PC-9 (cell line): ENCODE measurements at regions of chr12 and their contacts with region 1.

Region 1: DNA sequence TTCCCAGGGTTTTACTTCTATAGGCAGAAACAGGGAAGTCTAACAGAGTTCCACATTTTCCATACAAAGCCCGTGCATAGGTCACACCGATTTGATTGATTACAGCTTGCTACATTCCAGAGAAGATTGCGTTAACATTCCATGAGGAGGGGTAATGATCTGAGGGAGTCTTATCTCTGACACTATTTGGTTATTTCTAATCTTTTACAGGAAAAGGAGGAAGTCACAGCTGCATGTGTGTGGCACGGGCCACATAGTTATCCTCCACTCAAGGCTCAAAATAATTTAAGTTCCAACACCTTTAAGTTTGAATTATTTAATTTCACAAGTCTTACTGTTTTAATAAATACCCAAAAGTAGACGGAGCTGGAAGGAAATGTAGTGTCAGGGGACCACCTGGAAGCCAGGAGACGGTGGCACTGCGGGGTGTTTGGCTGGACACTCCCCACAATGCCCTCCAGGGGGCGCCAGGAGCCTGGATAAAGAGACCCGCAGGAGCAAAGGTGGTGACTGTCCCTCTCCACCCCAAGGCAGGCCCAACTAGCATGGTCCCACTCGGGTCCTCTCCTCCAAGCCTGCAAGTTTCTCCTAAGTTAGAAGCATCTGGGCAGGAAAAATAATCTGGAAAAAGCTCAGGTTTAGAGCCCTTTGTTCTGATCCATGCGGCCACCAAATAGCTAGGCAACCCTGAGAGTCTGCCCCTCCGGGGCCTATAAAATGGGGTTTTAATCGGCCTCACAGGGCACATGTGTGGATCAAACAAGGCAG is 20.2 kb downstream of the KRT8 start:
- DNase-seq: peak in 1 of 2 experiments; percentile 76
- H3K4me3 ChIP-seq: no peak overlapping the region
- H3K27ac ChIP-seq: no peak overlapping the region
- H3K4me1 ChIP-seq: peaks cover 6% of the 10 kb centered on the region
- H3K27me3 ChIP-seq: no peaks in the 10 kb centered on the region
- CTCF ChIP-seq: peak; percentile 97

Region 2: GRCh38 chr12:52805000-52805399 is 79.7 kb before region 1 on chr12:
- CTCF ChIA-PET with region 1: interaction called, 19 read pairs
- POLR2A ChIA-PET with region 1: no interaction called
- intact Hi-C with region 1: no loop called
- DNase-seq: peak in 1 of 2 experiments; percentile 63
- H3K4me3 ChIP-seq: no peak overlapping the region
- H3K27ac ChIP-seq: no peak overlapping the region
- H3K4me1 ChIP-seq: peaks cover 21% of the 10 kb centered on the region
- H3K27me3 ChIP-seq: no peaks in the 10 kb centered on the region
- CTCF ChIP-seq: no peak

Region 3: DNA sequence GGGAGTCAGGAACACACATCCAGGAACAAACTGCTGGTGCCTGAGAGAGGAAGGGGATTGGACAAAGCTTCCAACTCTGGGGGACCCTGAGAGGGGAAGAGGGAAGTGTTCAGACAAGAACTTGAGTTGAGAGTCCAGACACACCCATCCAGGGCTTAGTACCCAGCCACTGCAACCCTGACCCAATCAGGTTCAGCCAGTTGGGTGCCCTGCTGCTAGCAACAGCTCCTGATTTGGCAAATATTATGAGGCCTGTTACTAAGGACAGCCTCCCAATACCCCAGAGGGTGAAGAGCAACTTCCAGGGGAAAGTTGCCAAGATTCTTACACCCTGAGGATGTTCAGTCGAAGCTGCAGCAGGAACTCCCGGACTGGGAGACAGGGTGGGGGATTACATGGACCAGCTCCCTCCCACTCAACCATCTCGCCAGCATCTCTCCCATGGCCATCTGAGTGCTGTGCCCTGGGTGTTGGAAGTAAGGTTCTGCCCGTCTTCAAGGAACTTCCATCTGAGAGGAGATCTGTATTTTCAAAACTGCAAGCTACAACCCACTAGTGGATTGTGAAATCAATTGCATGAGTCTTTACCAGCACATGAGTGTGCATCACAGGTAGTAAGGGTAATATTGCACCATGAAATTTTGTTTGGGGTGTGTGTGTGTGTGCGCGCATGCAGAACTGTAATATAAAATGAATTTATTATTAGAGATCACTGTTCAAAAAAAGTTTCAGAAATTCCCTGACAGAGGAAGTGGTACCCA is 24.5 kb before region 1 on chr12:
- CTCF ChIA-PET with region 1: no interaction called
- POLR2A ChIA-PET with region 1: no interaction called
- intact Hi-C with region 1: no loop called
- DNase-seq: peak; percentile 83 to 95
- H3K4me3 ChIP-seq: no peak overlapping the region
- H3K27ac ChIP-seq: peak overlapping the region; percentile 69
- H3K4me1 ChIP-seq: peaks cover 52% of the 10 kb centered on the region
- H3K27me3 ChIP-seq: no peaks in the 10 kb centered on the region
- CTCF ChIP-seq: no peak

Region 4: GRCh38 chr12:52910248-52910883 is 25.7 kb after region 1 on chr12:
- CTCF ChIA-PET with region 1: interaction called, 5 read pairs
- POLR2A ChIA-PET with region 1: interaction called, 11 read pairs
- intact Hi-C with region 1: loop called (anchors 1 kb)
- DNase-seq: no peak
- H3K4me3 ChIP-seq: no peak overlapping the region
- H3K27ac ChIP-seq: peak overlapping the region; percentile 99; the same call in 1 of the 2 replicates
- H3K4me1 ChIP-seq: peaks cover 55% of the 10 kb centered on the region
- H3K27me3 ChIP-seq: no peaks in the 10 kb centered on the region
- CTCF ChIP-seq: no peak